Upper lobe of right lung (tissue), 1 donor: ENCODE measurements at regions of chr14 and their contacts with region 1.

Region 1: GRCh38 chr14:34722717-34723545 is 8.5 kb upstream of the CFL2 start:
- DNase-seq: no peak
- ATAC-seq: peak; percentile 86
- H3K4me3 ChIP-seq: no peak overlapping the region
- H3K27ac ChIP-seq: no peak overlapping the region
- H3K4me1 ChIP-seq: peaks cover 2% of the 10 kb centered on the region
- H3K27me3 ChIP-seq: no peaks in the 10 kb centered on the region
- CTCF ChIP-seq: peak; percentile 83

Region 2: GRCh38 chr14:34507459-34507858 is 215.5 kb before region 1 on chr14:
- intact Hi-C with region 1: no loop called
- DNase-seq: no peak
- ATAC-seq: no peak
- H3K4me3 ChIP-seq: no peak overlapping the region
- H3K27ac ChIP-seq: no peak overlapping the region
- H3K4me1 ChIP-seq: no peaks in the 10 kb centered on the region
- H3K27me3 ChIP-seq: no peaks in the 10 kb centered on the region
- CTCF ChIP-seq: no peak

Region 3: GRCh38 chr14:34522496-34522895 is 200.4 kb before region 1 on chr14:
- intact Hi-C with region 1: no loop called
- DNase-seq: no peak
- ATAC-seq: no peak
- H3K4me3 ChIP-seq: no peak overlapping the region
- H3K27ac ChIP-seq: no peak overlapping the region
- H3K4me1 ChIP-seq: no peaks in the 10 kb centered on the region
- H3K27me3 ChIP-seq: no peaks in the 10 kb centered on the region
- CTCF ChIP-seq: no peak

Region 4: GRCh38 chr14:34671716-34672115 is 51.2 kb before region 1 on chr14:
- intact Hi-C with region 1: loop called (anchors 5 kb)
- DNase-seq: no peak
- ATAC-seq: no peak
- H3K4me3 ChIP-seq: no peak overlapping the region
- H3K27ac ChIP-seq: no peak overlapping the region
- H3K4me1 ChIP-seq: peaks cover under 1% of the 10 kb centered on the region
- H3K27me3 ChIP-seq: no peaks in the 10 kb centered on the region
- CTCF ChIP-seq: no peak